CD14-positive monocyte (primary cell): ENCODE measurements at regions of chr1 and their contacts with region 1.

Region 1: DNA sequence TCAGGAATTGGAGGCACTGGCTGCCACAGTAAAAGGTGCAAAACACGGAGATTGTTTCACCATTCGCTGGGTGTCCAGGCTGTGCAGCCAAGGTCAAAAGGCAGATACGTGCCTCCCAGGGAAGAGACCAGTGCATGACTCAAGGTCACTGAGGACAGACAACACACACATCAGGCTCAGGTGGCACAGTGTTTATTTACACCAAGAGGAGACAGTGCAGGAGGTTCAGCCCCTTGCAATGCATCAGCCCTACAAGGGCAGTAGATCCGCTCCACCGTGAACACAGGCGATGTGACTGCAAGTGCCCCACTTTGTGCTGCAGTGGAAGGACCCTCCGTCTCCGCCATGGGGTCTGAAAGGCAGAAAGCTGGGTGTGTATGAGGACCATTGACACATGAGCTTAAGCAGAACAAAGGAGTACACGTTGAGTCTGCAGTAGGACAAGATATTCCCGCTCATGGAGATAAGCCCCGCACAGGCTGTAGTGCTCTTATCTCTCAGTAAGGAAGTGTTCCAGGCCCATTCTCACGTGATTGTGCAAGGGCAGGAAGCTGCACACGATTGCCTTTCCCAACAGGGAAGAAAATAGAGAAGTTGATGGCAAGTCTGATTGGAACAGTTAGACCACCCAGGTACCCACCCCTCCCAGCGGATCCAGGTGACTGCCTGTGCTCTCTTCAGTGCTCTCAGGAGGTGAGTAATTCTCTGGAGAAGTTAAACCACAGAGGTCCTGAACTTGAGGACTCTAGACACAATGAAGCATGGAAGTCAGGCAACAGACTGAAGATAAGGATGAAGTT is 37.5 kb upstream of the QSOX1 start:
- DNase-seq: peak; percentile 35 to 72 (median 67)
- H3K4me3 ChIP-seq: peak overlapping the region in 1 of 3 experiments; percentile 46
- H3K4me3 Mint-ChIP-seq: peak overlapping the region; percentile 37 to 67
- H3K27ac ChIP-seq: peak overlapping the region in 1 of 2 donors; percentile 36
- H3K27ac Mint-ChIP-seq: peak overlapping the region; percentile 28 to 87 (median 70)
- H3K4me1 ChIP-seq: peaks cover 32 to 33% of the 10 kb centered on the region in 2 donors
- H3K4me1 Mint-ChIP-seq: peaks cover 33% of the 10 kb centered on the region
- H3K27me3 ChIP-seq: no peaks in the 10 kb centered on the region
- H3K27me3 Mint-ChIP-seq: peaks cover 0 to 2% (median 1%) of the 10 kb centered on the region in 3 donors
- CTCF ChIP-seq: no peak

Region 2: GRCh38 chr1:180178511-180179161 is 61.5 kb after region 1 on chr1:
- intact Hi-C with region 1: loop called (anchors 5 kb)
- DNase-seq: peak; percentile 38 to 59 (median 51)
- H3K4me3 ChIP-seq: no peak overlapping the region
- H3K4me3 Mint-ChIP-seq: no peak overlapping the region
- H3K27ac ChIP-seq: no peak overlapping the region
- H3K27ac Mint-ChIP-seq: peak overlapping the region in 4 of 7 donors; percentile 22 to 82 (median 76)
- H3K4me1 ChIP-seq: no peaks in the 10 kb centered on the region
- H3K4me1 Mint-ChIP-seq: no peaks in the 10 kb centered on the region
- H3K27me3 ChIP-seq: no peaks in the 10 kb centered on the region
- H3K27me3 Mint-ChIP-seq: peaks cover 0 to 2% (median 0%) of the 10 kb centered on the region in 3 donors
- CTCF ChIP-seq: peak; percentile 95